ENCODE measurements at regions of chr7 and their contacts with region 1.

Region 1: GRCh38 chr7:135274495-135275268 is 41.0 kb downstream of the STRA8 start:
- DNase-seq: peak; percentile 73
- CTCF ChIP-seq: peak; percentile 88

Region 2: DNA sequence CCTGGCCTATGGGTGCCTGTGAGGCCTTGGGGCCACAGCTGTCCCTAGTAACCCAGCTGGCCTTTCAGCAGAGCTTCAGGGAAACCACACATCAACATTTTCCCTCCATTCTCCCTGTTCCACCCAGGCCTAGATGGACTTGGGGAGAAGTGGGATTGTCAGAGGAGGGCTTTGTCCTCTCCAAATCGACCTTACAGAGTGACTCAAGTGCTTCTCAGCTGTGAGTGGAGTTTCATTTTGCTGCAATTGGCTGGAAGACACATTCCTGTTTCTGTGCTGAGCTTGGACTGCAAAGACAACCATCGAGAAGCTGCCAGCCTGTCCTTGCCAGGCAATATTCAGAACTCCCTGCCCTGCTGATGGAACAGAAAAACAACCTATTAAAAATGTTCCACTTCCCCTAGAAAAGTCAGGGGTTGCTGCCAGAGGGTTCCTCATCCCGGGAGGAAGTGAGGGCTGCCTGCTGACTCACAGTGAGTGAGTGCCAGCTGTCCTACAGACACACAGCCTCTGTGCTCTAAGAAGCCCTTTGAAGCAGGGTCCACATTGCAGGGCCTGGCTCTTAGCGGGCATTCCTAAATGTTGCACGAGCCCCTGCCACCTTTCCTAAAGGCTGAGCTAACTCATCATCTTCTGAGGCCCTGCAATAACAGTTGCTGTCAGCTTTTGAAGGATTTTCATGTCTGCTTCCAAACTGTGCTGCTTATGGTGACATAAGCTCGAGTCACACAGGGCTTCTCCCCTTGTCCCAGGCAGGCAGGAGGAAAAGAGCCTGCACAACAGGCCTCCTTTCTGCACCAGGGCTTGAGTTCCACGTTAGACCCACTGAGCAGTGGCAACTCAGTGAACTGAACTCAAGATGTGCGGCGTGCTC is 20.5 kb before region 1 on chr7:
- CTCF ChIA-PET with region 1: interaction called, 19 read pairs
- POLR2A ChIA-PET with region 1: no interaction called
- DNase-seq: no peak
- CTCF ChIP-seq: no peak

Region 3: DNA sequence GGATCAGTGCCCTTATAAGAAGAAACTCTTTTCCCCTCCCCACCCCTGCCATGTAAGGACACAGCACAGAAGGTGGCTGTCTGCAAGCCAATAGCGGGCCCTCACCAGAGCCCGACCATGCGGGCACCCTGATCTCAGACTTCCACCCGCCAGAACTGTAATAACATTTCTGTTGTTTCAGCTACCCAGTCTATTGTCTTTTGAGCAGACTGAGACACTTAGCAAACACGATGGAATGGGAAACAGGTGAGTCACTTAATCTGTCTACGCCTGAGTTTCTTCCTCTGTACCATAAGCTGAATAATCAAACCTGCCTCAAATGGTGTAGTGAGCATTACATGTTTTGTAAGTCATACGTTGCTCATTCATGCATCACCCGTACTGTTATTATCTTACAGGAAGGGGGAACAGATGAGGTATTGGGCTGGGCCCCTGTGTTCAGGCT is 17.1 kb after region 1 on chr7:
- CTCF ChIA-PET with region 1: interaction called, 19 read pairs
- POLR2A ChIA-PET with region 1: no interaction called
- DNase-seq: no peak
- CTCF ChIP-seq: no peak

Region 4: GRCh38 chr7:135335628-135336139 is 61.0 kb after region 1 on chr7:
- CTCF ChIA-PET with region 1: interaction called, 73 read pairs
- POLR2A ChIA-PET with region 1: no interaction called
- DNase-seq: peak; percentile 70
- CTCF ChIP-seq: peak; percentile 38

Region 5: GRCh38 chr7:135575296-135575695 is 300.6 kb after region 1 on chr7:
- CTCF ChIA-PET with region 1: interaction called, 10 read pairs
- POLR2A ChIA-PET with region 1: no interaction called
- DNase-seq: no peak
- CTCF ChIP-seq: no peak

Region 6: GRCh38 chr7:135672560-135673359 is 398.1 kb after region 1 on chr7:
- CTCF ChIA-PET with region 1: interaction called, 14 read pairs
- POLR2A ChIA-PET with region 1: no interaction called
- DNase-seq: peak; percentile 45
- CTCF ChIP-seq: peak; percentile 58

Region 7: DNA sequence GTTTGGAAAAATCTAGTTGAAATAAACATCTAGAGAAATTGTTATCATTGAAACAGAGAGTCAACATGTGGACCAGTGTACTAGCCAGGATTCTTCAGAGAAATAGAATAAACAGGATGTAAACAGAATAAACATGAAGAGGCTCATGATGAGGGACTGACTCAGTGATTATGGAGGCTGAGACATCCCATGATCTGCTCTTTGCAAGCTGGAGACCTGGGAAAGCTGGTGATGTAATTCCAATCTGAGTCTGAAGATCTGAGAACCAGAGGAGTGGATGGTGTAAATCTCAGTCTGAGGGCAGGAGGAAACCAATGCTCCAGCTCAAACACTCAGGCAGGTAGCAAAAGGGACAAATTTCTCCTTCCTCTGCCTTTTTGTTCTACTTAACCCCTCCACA is 536.8 kb after region 1 on chr7:
- CTCF ChIA-PET with region 1: no interaction called
- POLR2A ChIA-PET with region 1: no interaction called
- DNase-seq: no peak
- CTCF ChIP-seq: no peak